Caco-2 (cell line): ENCODE measurements at regions of chr3 and their contacts with region 1.

Region 1: GRCh38 chr3:144341471-144341870 is 369.8 kb downstream of the DIPK2A start:
- DNase-seq: peak; percentile 56 to 66
- H3K4me3 ChIP-seq: peak overlapping the region; percentile 15
- H3K4me3 Mint-ChIP-seq: peak overlapping the region; percentile 66
- H3K27ac Mint-ChIP-seq: peak overlapping the region; percentile 89
- H3K4me1 ChIP-seq: peaks cover 50% of the 10 kb centered on the region
- H3K4me1 Mint-ChIP-seq: peaks cover 21% of the 10 kb centered on the region
- H3K27me3 ChIP-seq: no peaks in the 10 kb centered on the region
- H3K27me3 Mint-ChIP-seq: no peaks in the 10 kb centered on the region
- CTCF ChIP-seq: no peak

Region 2: DNA sequence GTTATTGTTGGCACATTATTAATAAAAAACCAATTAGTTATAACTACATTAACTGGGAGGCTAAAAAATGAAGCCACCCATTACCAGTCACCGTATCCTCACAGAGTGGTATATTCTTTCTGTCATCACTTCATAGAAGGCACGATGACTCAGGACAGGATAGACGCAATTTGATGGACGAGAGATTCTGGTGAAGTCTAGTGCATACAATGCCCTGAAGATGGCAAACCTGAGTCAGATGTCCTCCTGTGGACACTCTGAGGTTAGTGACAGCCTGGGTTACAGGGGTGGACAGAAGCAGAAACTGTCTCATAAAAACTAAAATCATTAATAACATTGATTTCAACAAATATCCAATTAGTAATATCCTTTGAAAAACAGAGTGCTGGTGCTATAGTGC is 643.5 kb before region 1 on chr3:
- CTCF ChIA-PET with region 1: no interaction called
- POLR2A ChIA-PET with region 1: no interaction called
- intact Hi-C with region 1: no loop called
- DNase-seq: no peak
- H3K4me3 ChIP-seq: no peak overlapping the region
- H3K4me3 Mint-ChIP-seq: no peak overlapping the region
- H3K27ac Mint-ChIP-seq: no peak overlapping the region
- H3K4me1 ChIP-seq: no peaks in the 10 kb centered on the region
- H3K4me1 Mint-ChIP-seq: no peaks in the 10 kb centered on the region
- H3K27me3 ChIP-seq: no peaks in the 10 kb centered on the region
- H3K27me3 Mint-ChIP-seq: peaks cover 7% of the 10 kb centered on the region
- CTCF ChIP-seq: no peak

Region 3: DNA sequence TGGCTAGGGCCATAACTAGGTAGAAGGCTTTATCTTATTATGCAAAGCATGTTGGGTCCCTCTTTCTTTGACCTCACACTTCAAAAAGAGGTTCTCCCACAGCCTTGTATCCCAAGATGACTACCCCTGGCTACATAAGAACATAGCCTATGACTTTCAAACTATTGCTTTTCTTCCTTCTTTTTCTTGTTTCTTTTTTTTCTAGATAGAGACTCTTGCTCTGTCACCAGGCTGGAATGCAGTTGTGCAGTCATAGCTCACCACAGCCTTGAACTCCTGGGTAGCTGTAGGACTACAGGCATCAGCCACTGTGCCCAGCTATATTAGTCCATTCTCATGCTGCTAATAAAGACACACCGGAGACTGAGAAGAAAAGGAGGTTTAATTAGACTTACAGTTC is 322.7 kb before region 1 on chr3:
- CTCF ChIA-PET with region 1: no interaction called
- POLR2A ChIA-PET with region 1: no interaction called
- intact Hi-C with region 1: no loop called
- DNase-seq: no peak
- H3K4me3 ChIP-seq: no peak overlapping the region
- H3K4me3 Mint-ChIP-seq: no peak overlapping the region
- H3K27ac Mint-ChIP-seq: no peak overlapping the region
- H3K4me1 ChIP-seq: no peaks in the 10 kb centered on the region
- H3K4me1 Mint-ChIP-seq: no peaks in the 10 kb centered on the region
- H3K27me3 ChIP-seq: no peaks in the 10 kb centered on the region
- H3K27me3 Mint-ChIP-seq: no peaks in the 10 kb centered on the region
- CTCF ChIP-seq: no peak

Region 4: GRCh38 chr3:144175644-144176425 is 165.6 kb before region 1 on chr3:
- CTCF ChIA-PET with region 1: no interaction called
- POLR2A ChIA-PET with region 1: no interaction called
- intact Hi-C with region 1: loop called (anchors 10 kb)
- DNase-seq: no peak
- H3K4me3 ChIP-seq: no peak overlapping the region
- H3K4me3 Mint-ChIP-seq: no peak overlapping the region
- H3K27ac Mint-ChIP-seq: peak overlapping the region; percentile 64
- H3K4me1 ChIP-seq: no peaks in the 10 kb centered on the region
- H3K4me1 Mint-ChIP-seq: no peaks in the 10 kb centered on the region
- H3K27me3 ChIP-seq: no peaks in the 10 kb centered on the region
- H3K27me3 Mint-ChIP-seq: no peaks in the 10 kb centered on the region
- CTCF ChIP-seq: no peak

Region 5: GRCh38 chr3:144294659-144295538 is 46.6 kb before region 1 on chr3:
- CTCF ChIA-PET with region 1: no interaction called
- POLR2A ChIA-PET with region 1: no interaction called
- intact Hi-C with region 1: loop called (anchors 2 kb)
- DNase-seq: no peak
- H3K4me3 ChIP-seq: no peak overlapping the region
- H3K4me3 Mint-ChIP-seq: peak overlapping the region; percentile 50
- H3K27ac Mint-ChIP-seq: peak overlapping the region; percentile 68
- H3K4me1 ChIP-seq: peaks cover 38% of the 10 kb centered on the region
- H3K4me1 Mint-ChIP-seq: peaks cover 21% of the 10 kb centered on the region
- H3K27me3 ChIP-seq: no peaks in the 10 kb centered on the region
- H3K27me3 Mint-ChIP-seq: no peaks in the 10 kb centered on the region
- CTCF ChIP-seq: no peak

Region 6: DNA sequence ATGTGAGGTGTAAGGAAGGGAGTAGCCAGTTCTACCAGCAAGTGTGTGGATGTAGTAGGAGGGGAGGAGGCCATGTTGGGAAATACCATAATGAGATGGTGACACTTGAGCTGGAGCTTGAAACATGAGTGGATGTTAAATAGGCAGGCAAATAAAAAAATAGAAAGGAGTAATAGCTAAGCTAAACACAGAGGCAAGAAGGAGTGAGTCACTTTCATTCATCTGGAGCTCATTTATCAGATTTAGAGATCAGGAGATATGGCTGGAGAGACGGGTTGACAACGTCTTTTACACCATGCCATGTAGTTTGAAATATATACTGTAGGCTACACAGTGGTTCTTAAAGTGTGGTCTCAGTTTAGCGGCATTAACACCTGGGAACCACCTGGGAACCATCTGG is 20.7 kb after region 1 on chr3:
- CTCF ChIA-PET with region 1: no interaction called
- POLR2A ChIA-PET with region 1: no interaction called
- intact Hi-C with region 1: loop called (anchors 2 kb)
- DNase-seq: no peak
- H3K4me3 ChIP-seq: no peak overlapping the region
- H3K4me3 Mint-ChIP-seq: no peak overlapping the region
- H3K27ac Mint-ChIP-seq: peak overlapping the region; percentile 54
- H3K4me1 ChIP-seq: peaks cover 74% of the 10 kb centered on the region
- H3K4me1 Mint-ChIP-seq: peaks cover 45% of the 10 kb centered on the region
- H3K27me3 ChIP-seq: no peaks in the 10 kb centered on the region
- H3K27me3 Mint-ChIP-seq: no peaks in the 10 kb centered on the region
- CTCF ChIP-seq: no peak

Region 7: DNA sequence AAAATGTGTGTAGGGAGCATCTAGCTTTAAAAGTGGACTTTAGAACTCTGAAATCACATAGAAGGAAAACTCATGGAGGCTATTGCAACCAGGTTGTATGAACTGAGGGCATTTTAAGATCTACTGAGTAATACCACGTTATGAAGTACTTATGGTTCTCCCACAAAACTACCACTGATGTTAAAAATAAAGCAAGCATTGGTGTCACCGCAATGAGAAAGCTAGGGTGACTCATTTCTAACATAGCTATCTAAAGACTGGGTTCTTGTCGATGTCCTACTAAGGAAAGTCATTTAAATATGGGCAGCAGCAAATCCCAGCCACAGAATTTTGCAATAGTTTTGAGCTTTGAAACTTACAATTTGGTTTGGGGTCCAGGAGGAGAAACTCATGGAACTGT is 214.9 kb after region 1 on chr3:
- CTCF ChIA-PET with region 1: no interaction called
- POLR2A ChIA-PET with region 1: no interaction called
- intact Hi-C with region 1: loop called (anchors 5 kb)
- DNase-seq: no peak
- H3K4me3 ChIP-seq: no peak overlapping the region
- H3K4me3 Mint-ChIP-seq: no peak overlapping the region
- H3K27ac Mint-ChIP-seq: no peak overlapping the region
- H3K4me1 ChIP-seq: peaks cover 26% of the 10 kb centered on the region
- H3K4me1 Mint-ChIP-seq: peaks cover 25% of the 10 kb centered on the region
- H3K27me3 ChIP-seq: no peaks in the 10 kb centered on the region
- H3K27me3 Mint-ChIP-seq: no peaks in the 10 kb centered on the region
- CTCF ChIP-seq: no peak